AG04450 (cell line): ENCODE measurements at regions of chr2 and their contacts with region 1.

Region 1: GRCh38 chr2:63424329-63425078 is 163.8 kb downstream of the WDPCP start:
- DNase-seq: no peak
- H3K4me3 ChIP-seq: no peak overlapping the region
- H3K27ac ChIP-seq: no peak overlapping the region
- H3K27me3 ChIP-seq: no peaks in the 10 kb centered on the region
- CTCF ChIP-seq: peak; percentile 49

Region 2: GRCh38 chr2:62705007-62705829 is 719.3 kb before region 1 on chr2 and contains the start of gene EHBP1:
- CTCF ChIA-PET with region 1: no interaction called
- POLR2A ChIA-PET with region 1: no interaction called
- DNase-seq: peak; percentile 100
- H3K4me3 ChIP-seq: peak within 1 kb of the TSS; percentile 86
- H3K27ac ChIP-seq: peak within 1 kb of the TSS; percentile 69
- H3K27me3 ChIP-seq: no peaks in the 10 kb centered on the region
- CTCF ChIP-seq: no peak
- polyA plus RNA-seq, gene EHBP1: 48.2 and 68.6 TPM in 2 replicates

Region 3: GRCh38 chr2:63399156-63399555 is 25.3 kb before region 1 on chr2:
- CTCF ChIA-PET with region 1: interaction called, 10 read pairs
- POLR2A ChIA-PET with region 1: no interaction called
- DNase-seq: no peak
- H3K4me3 ChIP-seq: no peak overlapping the region
- H3K27ac ChIP-seq: no peak overlapping the region
- H3K27me3 ChIP-seq: no peaks in the 10 kb centered on the region
- CTCF ChIP-seq: no peak

Region 4: GRCh38 chr2:63438181-63438580 is 13.7 kb after region 1 on chr2:
- CTCF ChIA-PET with region 1: interaction called, 14 read pairs
- POLR2A ChIA-PET with region 1: no interaction called
- DNase-seq: no peak
- H3K4me3 ChIP-seq: no peak overlapping the region
- H3K27ac ChIP-seq: no peak overlapping the region
- H3K27me3 ChIP-seq: no peaks in the 10 kb centered on the region
- CTCF ChIP-seq: no peak

Region 5: DNA sequence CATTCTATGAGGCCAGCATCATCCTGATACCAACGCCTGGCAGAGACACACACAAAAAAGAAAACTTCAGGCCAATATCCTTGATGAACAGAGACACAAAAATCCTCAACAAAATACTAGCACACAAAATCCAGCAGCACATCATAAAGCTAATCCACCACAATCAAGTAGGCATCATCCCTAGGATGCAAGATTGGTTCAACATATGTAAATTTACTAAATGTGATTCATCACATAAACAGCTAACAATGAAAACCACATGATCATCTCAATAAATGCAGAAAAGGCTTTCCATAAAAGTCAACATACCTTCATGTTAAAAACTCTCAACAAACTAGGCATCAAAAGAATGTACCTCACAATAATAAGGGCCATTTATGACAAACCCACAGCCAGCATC is 98.4 kb after region 1 on chr2:
- CTCF ChIA-PET with region 1: no interaction called
- POLR2A ChIA-PET with region 1: no interaction called
- DNase-seq: no peak
- H3K4me3 ChIP-seq: no peak overlapping the region
- H3K27ac ChIP-seq: no peak overlapping the region
- H3K27me3 ChIP-seq: no peaks in the 10 kb centered on the region
- CTCF ChIP-seq: no peak

Region 6: DNA sequence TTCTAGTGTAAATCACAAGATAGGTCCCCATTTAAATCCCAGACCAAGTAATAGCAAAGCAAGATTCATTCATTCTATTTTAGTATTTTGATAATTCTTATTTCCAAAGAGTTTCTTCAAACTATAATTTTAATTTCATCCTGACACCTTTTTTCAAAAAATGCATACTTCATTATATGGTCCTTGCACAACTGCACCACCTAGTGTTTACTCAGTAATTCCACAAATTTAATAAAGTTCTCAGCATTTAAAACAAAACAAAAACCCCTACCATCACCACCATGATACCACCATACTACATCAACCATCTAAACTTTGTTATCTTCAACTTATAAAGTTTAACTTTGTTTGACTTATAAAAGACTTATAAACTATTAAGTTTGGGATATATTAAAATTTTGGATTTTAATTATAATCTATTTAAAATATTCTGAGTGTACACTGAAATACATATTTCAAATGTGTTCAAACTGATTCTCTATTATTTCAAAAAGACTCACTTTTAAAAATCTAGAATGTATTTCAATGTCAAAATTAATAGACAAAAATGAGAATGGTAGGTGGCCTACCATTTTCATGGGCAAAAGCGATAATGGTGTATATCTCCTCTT is 119.6 kb after region 1 on chr2:
- CTCF ChIA-PET with region 1: no interaction called
- POLR2A ChIA-PET with region 1: no interaction called
- DNase-seq: no peak
- H3K4me3 ChIP-seq: no peak overlapping the region
- H3K27ac ChIP-seq: no peak overlapping the region
- H3K27me3 ChIP-seq: no peaks in the 10 kb centered on the region
- CTCF ChIP-seq: peak; percentile 58

Region 7: DNA sequence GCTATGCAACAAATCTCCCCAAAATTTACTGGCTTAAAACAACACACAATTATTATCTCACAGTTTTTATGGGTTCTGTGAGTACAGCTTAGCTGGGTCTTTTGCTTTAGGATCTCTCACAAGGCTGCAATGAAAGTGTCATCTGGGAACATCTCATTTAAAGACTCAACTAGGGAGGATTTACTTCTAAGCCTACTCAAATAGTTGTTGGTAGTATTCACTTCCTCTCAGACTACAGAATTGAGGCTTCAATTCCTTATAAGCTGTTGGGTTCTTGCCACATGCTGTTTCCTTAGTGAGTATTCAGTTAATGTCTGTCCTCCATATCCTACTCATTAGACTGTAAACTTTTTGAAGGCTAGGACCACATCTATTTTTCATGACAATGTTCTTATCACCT is 236.6 kb after region 1 on chr2:
- CTCF ChIA-PET with region 1: no interaction called
- POLR2A ChIA-PET with region 1: no interaction called
- DNase-seq: peak; percentile 62
- H3K4me3 ChIP-seq: no peak overlapping the region
- H3K27ac ChIP-seq: no peak overlapping the region
- H3K27me3 ChIP-seq: no peaks in the 10 kb centered on the region
- CTCF ChIP-seq: no peak